Activated CD4-positive, alpha-beta T cell treated with anti-CD3 and anti-CD28 coated beads, Interleukin-2, amount 10 ng/mL, durations not matched to agents 24 days and 14 days (primary cell): ENCODE measurements at regions of chr16 and their contacts with region 1.

Region 1: GRCh38 chr16:28974437-28975157 is at the start of gene SPNS1:
- DNase-seq: peak; percentile 98
- H3K4me3 Mint-ChIP-seq: peak within 1 kb of the TSS; percentile 96
- H3K27ac Mint-ChIP-seq: peak within 1 kb of the TSS; percentile 88
- H3K4me1 Mint-ChIP-seq: peaks cover 28% of the 10 kb centered on the region
- H3K27me3 Mint-ChIP-seq: no peaks in the 10 kb centered on the region
- total RNA-seq, gene SPNS1: 21.2 and 23.1 TPM in 2 replicates

Region 2: DNA sequence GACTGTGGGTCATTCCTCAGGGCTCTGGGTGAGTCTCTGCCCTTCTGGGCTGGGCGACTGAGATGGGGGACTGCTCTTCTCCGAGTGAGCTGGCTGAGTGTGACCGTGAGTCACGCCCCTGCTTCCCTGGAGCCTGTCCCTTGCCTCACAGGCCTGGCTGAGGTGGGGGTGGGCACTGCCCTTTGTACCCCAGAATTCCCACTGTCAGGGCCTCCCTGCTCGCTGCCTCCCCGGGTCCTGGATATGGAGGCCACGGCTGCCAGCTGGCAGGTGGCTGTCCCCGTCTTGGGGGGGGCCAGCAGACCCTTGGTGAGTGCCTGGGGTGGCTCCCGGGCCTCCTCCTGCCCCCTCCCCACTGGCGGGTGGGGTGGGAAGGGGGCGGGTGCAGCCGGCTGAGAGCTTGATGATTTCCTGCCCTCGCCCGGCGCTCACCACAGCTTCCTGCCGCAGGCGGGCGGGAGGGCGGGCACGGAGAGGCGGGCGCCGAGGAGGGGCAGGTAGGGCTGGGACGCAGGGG is 10.1 kb after region 1 on chr16 and contains the start of gene LAT:
- intact Hi-C with region 1: loop called (anchors 1 kb)
- DNase-seq: peak; percentile 93
- H3K4me3 Mint-ChIP-seq: peak within 1 kb of the TSS; percentile 100
- H3K27ac Mint-ChIP-seq: peak within 1 kb of the TSS; percentile 99
- H3K4me1 Mint-ChIP-seq: peaks cover 35% of the 10 kb centered on the region
- H3K27me3 Mint-ChIP-seq: no peaks in the 10 kb centered on the region
- total RNA-seq, gene LAT: 228 and 238 TPM in 2 replicates